CD4-positive, alpha-beta T cell (primary cell): ENCODE measurements at regions of chr11 and their contacts with region 1.

Region 1: GRCh38 chr11:18615628-18616392 is 16.2 kb downstream of the MISFA start:
- DNase-seq: peak in 3 of 14 experiments; percentile 17 to 41 (median 36)
- ATAC-seq: no peak
- H3K4me3 ChIP-seq: no peak overlapping the region
- H3K4me3 Mint-ChIP-seq: no peak overlapping the region
- H3K27ac ChIP-seq: no peak overlapping the region
- H3K27ac Mint-ChIP-seq: no peak overlapping the region
- H3K4me1 ChIP-seq: peaks cover 31% of the 10 kb centered on the region
- H3K4me1 Mint-ChIP-seq: peaks cover 52% of the 10 kb centered on the region
- H3K27me3 ChIP-seq: no peaks in the 10 kb centered on the region
- H3K27me3 Mint-ChIP-seq: no peaks in the 10 kb centered on the region
- CTCF ChIP-seq: no peak

Region 2: GRCh38 chr11:18588297-18589252 is 27.2 kb before region 1 on chr11 and contains the start of gene UEVLD:
- CTCF ChIA-PET with region 1: no interaction called
- POLR2A ChIA-PET with region 1: interaction called, 12 read pairs
- intact Hi-C with region 1: no loop called
- DNase-seq: peak in 13 of 14 experiments; percentile 5 to 86 (median 38)
- ATAC-seq: peak; percentile 45
- H3K4me3 ChIP-seq: peak within 1 kb of the TSS; percentile 90
- H3K4me3 Mint-ChIP-seq: no peak within 1 kb of the TSS
- H3K27ac ChIP-seq: peak within 1 kb of the TSS; percentile 66 to 92
- H3K27ac Mint-ChIP-seq: no peak within 1 kb of the TSS
- H3K4me1 ChIP-seq: peaks cover 52% of the 10 kb centered on the region
- H3K4me1 Mint-ChIP-seq: no peaks in the 10 kb centered on the region
- H3K27me3 ChIP-seq: no peaks in the 10 kb centered on the region
- H3K27me3 Mint-ChIP-seq: no peaks in the 10 kb centered on the region
- CTCF ChIP-seq: no peak
- total RNA-seq, gene UEVLD: 1.5 to 2.9 TPM